Left cardiac atrium (tissue), 4 donors: ENCODE measurements at regions of chr19 and their contacts with region 1.

Region 1: DNA sequence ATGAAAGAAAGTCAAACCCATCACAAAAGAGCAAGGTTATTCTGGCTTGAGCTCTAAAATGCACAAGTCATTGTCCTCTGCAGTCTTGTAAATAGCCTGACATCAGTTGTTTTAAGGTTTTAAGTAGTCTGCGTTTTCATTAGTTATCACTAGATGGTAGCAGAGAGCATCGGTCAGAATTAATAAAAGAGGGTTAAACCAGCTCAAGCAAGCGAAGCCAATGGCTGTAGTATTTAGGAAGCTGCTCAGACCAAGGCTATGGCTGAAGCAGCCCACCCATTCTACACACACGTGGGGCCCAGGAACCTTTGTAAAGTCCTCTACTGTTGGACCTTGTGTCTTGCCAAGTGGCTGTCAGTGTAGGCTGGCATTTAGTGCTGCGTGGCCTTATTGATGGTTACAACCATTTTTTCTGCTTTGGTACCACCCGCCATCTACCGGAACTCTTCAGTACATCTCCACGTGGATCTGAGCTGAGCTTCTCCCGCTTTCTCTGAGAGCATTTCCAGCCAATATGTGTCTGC is 13.3 kb upstream of the ZNF57 start:
- DNase-seq: no peak
- ATAC-seq: peak; percentile 50 to 75

Region 2: GRCh38 chr19:2944775-2945574 is 57.5 kb after region 1 on chr19 and contains the start of gene ZNF77:
- intact Hi-C with region 1: loop called in 1 of 2 experiments (anchors 10 kb)
- DNase-seq: peak; percentile 99
- ATAC-seq: peak; percentile 99
- total RNA-seq, gene ZNF77: 2.7 to 3.5 TPM